HEK293 (cell line): ENCODE measurements at regions of chr12 and their contacts with region 1.

Region 1: GRCh38 chr12:48851883-48852733 is at the start of gene DDX23:
- H3K4me3 ChIP-seq: peak within 1 kb of the TSS; percentile 96
- H3K27ac ChIP-seq: peak within 1 kb of the TSS; percentile 79
- H3K4me1 ChIP-seq: peaks cover 4% of the 10 kb centered on the region
- CTCF ChIP-seq: no peak; the same call in 1 of the 2 replicates

Region 2: DNA sequence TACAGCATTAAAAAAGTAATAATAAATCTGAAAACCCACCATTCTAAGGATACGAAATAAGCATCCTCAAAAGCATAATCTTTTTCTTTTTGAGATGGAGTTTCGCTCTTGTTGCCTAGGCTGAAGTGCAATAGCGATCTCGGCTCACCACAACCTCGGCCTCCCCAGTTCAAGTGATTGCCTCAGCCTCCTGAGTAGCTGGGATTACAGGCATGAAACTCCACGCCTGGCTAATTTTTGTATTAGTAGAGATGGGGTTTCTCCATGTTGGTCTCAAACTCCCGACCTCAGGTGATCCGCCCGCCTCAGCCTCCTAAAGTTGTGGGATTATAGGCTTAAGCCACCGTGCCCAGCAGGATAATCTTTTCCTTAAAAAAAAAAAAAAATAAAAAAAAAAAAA is 139.9 kb before region 1 on chr12:
- CTCF ChIA-PET with region 1: no interaction called
- POLR2A ChIA-PET with region 1: no interaction called
- H3K4me3 ChIP-seq: no peak overlapping the region
- H3K27ac ChIP-seq: no peak overlapping the region
- H3K4me1 ChIP-seq: 0 out of 2 replicates have a peak, but pooled peaks cover 2% of the 10 kb centered on the region
- CTCF ChIP-seq: no peak

Region 3: GRCh38 chr12:48728807-48729206 is 123.3 kb before region 1 on chr12:
- CTCF ChIA-PET with region 1: no interaction called
- POLR2A ChIA-PET with region 1: no interaction called
- H3K4me3 ChIP-seq: no peak overlapping the region
- H3K27ac ChIP-seq: no peak overlapping the region
- H3K4me1 ChIP-seq: no peaks in the 10 kb centered on the region
- CTCF ChIP-seq: no peak

Region 4: GRCh38 chr12:48814262-48815125 is 37.6 kb before region 1 on chr12:
- CTCF ChIA-PET with region 1: interaction called, 28 read pairs
- POLR2A ChIA-PET with region 1: interaction called, 12 read pairs
- H3K4me3 ChIP-seq: peak overlapping the region; percentile 63
- H3K27ac ChIP-seq: peak overlapping the region; percentile 79; the same call in 1 of the 2 replicates
- H3K4me1 ChIP-seq: peaks cover 3% of the 10 kb centered on the region; the same call in 1 of the 2 replicates
- CTCF ChIP-seq: peak; percentile 99

Region 5: DNA sequence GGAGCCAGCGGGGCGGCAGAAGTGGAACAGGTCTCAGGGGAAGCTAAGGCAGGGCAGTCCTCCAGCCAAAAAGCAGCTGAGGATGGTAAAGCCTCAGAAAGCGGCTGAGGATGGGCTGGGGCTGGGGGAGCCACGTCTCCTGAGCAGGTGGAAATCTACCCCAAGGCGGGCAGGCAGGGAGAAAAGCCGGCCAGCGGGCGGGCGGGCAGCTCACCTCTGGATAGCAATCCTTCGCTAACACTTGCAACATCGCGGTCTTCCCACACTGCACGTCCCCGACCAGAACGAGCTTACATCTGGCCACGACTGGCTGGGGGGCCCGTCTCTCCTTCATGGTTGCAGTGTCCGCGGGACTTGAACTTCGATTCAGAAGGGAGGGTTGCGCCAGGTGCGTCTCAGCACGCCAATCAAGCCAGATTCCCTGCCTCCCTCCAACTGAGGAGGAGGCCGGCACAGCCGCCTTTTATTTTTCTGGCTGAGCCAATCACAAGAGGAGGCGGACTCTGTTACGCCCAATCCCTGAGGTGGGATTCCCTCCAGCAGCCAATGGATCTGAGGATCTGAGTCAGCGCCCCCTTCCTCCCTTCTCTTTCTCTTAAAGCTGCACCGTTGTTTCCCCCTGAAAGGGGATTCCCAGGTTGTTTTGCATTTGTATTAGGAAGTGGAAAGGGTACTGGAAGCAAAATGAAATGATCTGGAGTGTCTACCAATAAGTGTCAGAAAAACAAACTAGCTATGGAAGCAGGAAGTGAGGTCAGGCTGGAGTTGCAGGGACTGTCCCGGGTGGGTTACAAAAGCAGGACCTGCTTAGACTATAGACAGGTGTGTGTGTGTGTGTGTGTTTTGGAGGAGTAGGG is 13.6 kb after region 1 on chr12 and contains the start of gene RND1:
- CTCF ChIA-PET with region 1: interaction called, 24 read pairs
- POLR2A ChIA-PET with region 1: interaction called, 27 read pairs
- H3K4me3 ChIP-seq: peak within 1 kb of the TSS; percentile 43
- H3K27ac ChIP-seq: no peak within 1 kb of the TSS; the same call in 1 of the 2 replicates
- H3K4me1 ChIP-seq: peaks cover 6% of the 10 kb centered on the region
- CTCF ChIP-seq: no peak; the same call in 1 of the 2 replicates

Region 6: DNA sequence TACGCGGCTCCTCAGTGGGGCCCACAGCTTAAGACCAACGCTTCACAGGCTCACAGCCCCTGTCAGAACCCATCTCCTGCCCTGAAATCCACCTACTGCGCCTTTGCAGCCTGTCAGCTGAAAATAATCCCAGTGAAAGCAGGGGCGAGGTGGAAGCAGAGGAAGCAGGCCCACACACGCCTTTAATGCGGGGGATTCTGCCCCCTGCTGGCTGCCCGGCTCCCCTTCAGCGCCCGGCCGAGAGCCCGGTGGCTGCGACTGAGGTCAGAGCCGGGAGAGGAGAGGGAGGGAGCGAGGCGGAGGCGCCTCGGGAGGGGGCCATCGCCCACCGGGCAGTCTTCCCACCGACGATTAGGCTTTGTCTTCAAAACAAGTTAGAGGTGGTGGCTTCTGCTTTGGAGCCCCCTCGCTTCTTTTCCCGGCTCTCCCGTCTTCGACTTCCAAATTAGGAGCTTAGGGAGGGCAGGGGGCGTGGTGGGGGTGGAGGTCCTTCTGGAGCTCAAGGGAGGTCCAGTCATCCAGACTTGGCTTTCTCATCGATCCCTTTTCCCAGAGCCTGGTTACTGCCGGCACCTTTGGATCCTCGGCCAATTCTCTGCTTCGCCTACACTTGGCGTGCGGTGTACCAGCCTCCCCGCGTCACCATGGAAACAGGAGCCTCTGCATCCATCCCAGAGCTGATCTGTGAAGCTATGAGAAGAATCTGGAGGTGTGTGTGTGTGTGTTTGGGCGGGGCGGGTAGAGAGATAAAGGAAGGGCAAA is 38.7 kb after region 1 on chr12:
- CTCF ChIA-PET with region 1: interaction called, 301 read pairs
- POLR2A ChIA-PET with region 1: interaction called, 48 read pairs
- H3K4me3 ChIP-seq: peak overlapping the region; percentile 20
- H3K27ac ChIP-seq: no peak overlapping the region
- H3K4me1 ChIP-seq: no peaks in the 10 kb centered on the region
- CTCF ChIP-seq: peak; percentile 95

Region 7: GRCh38 chr12:48957141-48958048 is 105.3 kb after region 1 on chr12 and contains the start of gene ARF3:
- CTCF ChIA-PET with region 1: interaction called, 4 read pairs
- POLR2A ChIA-PET with region 1: interaction called, 28 read pairs
- H3K4me3 ChIP-seq: peak within 1 kb of the TSS; percentile 81
- H3K27ac ChIP-seq: peak within 1 kb of the TSS; percentile 90
- H3K4me1 ChIP-seq: no peaks in the 10 kb centered on the region
- CTCF ChIP-seq: no peak; the same call in none of the 2 replicates

Region 8: DNA sequence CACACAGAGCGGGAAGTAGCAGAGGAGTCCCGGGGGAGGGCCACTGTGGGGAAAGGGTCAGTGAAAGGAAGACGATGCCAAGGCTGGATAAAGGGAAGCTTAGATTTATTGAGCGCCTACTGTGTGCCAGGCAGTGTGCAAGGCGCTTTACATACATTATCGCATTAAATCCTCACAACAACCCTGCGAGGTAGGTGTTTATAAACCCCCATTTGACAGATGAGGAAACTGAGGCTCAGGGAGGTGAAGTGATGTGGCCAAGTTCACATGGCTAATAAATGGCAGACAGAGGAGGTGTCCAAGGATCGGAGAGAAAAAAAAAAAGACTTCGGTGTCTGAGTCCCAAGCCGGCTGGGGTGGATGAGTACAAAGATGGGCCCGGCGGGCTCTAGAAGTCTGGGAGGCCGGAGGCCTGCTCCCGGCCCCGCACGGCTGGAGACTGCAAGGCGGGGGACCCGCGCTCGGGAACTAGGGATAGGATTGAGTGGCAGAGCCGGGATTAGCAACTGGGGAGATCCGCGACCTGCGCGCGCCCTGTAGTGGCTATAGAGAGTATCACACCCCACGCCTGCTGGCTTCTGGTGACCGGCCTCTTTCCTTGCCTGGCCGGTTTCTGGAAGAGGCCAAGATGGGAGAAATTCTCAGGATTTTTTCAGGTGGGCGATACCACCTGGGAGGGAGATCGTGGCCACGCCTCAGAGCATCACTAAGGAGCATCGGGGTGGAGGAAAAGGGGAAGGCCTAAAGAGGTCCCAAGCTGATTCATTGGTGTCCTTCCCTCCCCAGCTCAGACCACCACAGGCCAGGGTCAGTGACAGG is 143.2 kb after region 1 on chr12:
- CTCF ChIA-PET with region 1: interaction called, 32 read pairs
- POLR2A ChIA-PET with region 1: interaction called, 6 read pairs
- H3K4me3 ChIP-seq: no peak overlapping the region
- H3K27ac ChIP-seq: no peak overlapping the region
- H3K4me1 ChIP-seq: peaks cover 6% of the 10 kb centered on the region
- CTCF ChIP-seq: peak; percentile 68

Region 9: GRCh38 chr12:49336645-49337584 is 484.8 kb after region 1 on chr12 and contains the start of gene C1QL4:
- CTCF ChIA-PET with region 1: no interaction called
- POLR2A ChIA-PET with region 1: no interaction called
- H3K4me3 ChIP-seq: peak within 1 kb of the TSS; percentile 49
- H3K27ac ChIP-seq: no peak within 1 kb of the TSS; the same call in 1 of the 2 replicates
- H3K4me1 ChIP-seq: peaks cover 9% of the 10 kb centered on the region; the same call in 1 of the 2 replicates
- CTCF ChIP-seq: peak; percentile 85